CD4-positive, alpha-beta memory T cell (primary cell): ENCODE measurements at regions of chr1 and their contacts with region 1.

Region 1: DNA sequence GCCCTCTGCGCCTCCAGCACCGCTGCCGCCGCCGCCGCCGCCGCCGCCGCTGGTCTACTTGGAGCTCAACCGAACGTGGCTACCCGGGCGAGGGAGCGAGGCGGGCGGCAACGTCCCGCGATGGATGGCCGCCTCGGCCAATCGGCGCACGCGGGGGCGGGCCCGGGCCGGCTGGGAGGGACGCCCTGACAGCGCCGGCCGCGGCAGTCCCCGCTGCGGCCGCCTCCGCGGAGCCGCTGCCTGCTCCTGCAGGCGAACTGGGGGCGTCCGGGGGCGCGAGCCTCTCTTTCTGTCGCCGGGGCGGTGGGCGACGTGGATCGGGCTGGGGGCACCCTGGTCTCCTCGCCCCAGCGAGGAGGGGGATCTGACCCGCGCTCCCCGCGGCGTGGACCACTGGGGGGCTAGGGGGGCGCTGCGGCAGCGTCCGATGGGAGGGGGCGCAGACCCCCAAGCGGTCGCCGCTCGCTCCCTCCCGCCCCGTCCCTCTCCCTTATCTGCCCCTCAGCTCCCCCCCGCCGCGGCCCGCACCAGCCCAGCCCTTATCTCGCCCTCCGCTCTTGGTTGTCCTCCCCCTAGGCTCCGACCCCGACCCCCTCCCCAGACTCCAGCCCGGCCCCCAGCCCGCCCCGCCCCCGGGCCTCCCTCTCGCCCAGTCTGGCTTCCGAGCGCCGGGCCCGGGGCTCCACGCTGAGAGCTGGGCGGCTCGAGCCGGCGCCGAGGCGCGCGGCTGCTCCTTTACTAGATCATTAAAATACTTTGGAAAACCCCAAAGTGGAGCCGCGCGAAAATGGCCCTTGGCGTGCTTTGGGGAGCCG is at the start of gene SSBP3:
- DNase-seq: peak; percentile 93 to 94 (median 93)
- H3K4me3 ChIP-seq: peak within 1 kb of the TSS; percentile 45 to 91
- H3K4me3 Mint-ChIP-seq: peak within 1 kb of the TSS; percentile 95 to 99 (median 97)
- H3K27ac ChIP-seq: peak within 1 kb of the TSS; percentile 87
- H3K27ac Mint-ChIP-seq: peak within 1 kb of the TSS; percentile 88 to 99 (median 97)
- H3K4me1 ChIP-seq: peaks cover 67% of the 10 kb centered on the region
- H3K4me1 Mint-ChIP-seq: peaks cover 51 to 77% (median 62%) of the 10 kb centered on the region in 4 donors
- H3K27me3 ChIP-seq: no peaks in the 10 kb centered on the region
- H3K27me3 Mint-ChIP-seq: peaks cover 0 to 1% of the 10 kb centered on the region in 2 donors
- total RNA-seq, gene SSBP3: 67.6 to 87.6 TPM

Region 2: DNA sequence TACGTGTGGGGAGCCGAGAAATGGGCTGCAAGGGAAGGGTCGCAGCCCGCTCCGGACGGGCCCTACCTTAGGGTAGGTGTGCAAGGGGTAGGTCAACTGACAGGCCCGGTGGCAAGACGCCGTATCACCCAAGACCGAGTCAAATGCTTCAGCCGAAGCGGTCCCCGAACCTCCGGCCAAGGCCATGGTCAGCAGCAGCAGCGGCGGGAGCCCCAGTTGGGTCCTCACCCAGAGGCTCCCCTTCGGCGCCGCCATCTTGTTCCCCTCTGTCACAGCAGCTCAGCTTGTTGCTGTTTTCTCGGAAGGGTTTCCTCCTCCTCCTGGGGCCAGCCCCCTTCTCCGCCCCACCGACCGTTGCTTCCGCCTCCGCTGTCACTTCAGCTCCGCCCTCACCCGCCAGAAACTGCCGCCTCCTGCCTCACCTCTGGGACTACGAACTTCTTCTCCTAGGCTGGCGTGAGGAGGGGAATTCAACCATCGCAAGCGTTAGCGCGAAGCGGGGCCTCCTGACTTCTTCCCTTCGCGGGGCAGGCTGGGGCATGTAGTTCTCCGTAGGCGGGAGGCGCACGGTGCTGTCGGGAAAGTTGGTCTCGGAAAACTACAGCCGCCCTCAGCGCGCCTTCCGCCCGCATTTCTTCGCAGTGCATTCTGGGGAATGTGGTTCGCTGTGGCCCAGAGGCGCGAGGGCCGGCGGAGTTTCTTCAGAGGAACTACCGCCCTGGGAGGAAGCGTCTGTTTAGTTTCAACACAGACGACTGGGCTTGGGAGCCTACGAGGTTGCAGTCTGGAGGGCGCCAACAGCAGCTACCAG is 353.4 kb before region 1 on chr1 and contains the starts of genes TCEANC2 and TMEM59:
- CTCF ChIA-PET with region 1: no interaction called
- POLR2A ChIA-PET with region 1: interaction called, 15 read pairs
- intact Hi-C with region 1: loop called (anchors 1 kb)
- DNase-seq: peak; percentile 97 to 100 (median 99)
- H3K4me3 ChIP-seq: peak within 1 kb of the TSS; percentile 98 to 99
- H3K4me3 Mint-ChIP-seq: no peak within 1 kb of the TSS
- H3K27ac ChIP-seq: peak within 1 kb of the TSS; percentile 88
- H3K27ac Mint-ChIP-seq: no peak within 1 kb of the TSS
- H3K4me1 ChIP-seq: peaks cover 59% of the 10 kb centered on the region
- H3K4me1 Mint-ChIP-seq: peaks cover 23 to 49% (median 37%) of the 10 kb centered on the region in 4 donors
- H3K27me3 ChIP-seq: no peaks in the 10 kb centered on the region
- H3K27me3 Mint-ChIP-seq: no peaks in the 10 kb centered on the region
- total RNA-seq, gene TCEANC2: 12.1 to 13.1 TPM
- total RNA-seq, gene TMEM59: 212 to 222 TPM

Region 3: GRCh38 chr1:54121482-54122134 is 284.9 kb before region 1 on chr1:
- CTCF ChIA-PET with region 1: no interaction called
- POLR2A ChIA-PET with region 1: no interaction called
- intact Hi-C with region 1: loop called (anchors 2 kb)
- DNase-seq: peak in 4 of 5 donors; percentile 36 to 56 (median 45)
- H3K4me3 ChIP-seq: no peak overlapping the region
- H3K4me3 Mint-ChIP-seq: peak overlapping the region in 3 of 8 donors; percentile 31 to 49 (median 37)
- H3K27ac ChIP-seq: no peak overlapping the region
- H3K27ac Mint-ChIP-seq: peak overlapping the region in 1 of 7 donors; percentile 41
- H3K4me1 ChIP-seq: no peaks in the 10 kb centered on the region
- H3K4me1 Mint-ChIP-seq: peaks cover 0 to 11% (median 7%) of the 10 kb centered on the region in 4 donors
- H3K27me3 ChIP-seq: peaks cover 3% of the 10 kb centered on the region
- H3K27me3 Mint-ChIP-seq: no peaks in the 10 kb centered on the region

Region 4: DNA sequence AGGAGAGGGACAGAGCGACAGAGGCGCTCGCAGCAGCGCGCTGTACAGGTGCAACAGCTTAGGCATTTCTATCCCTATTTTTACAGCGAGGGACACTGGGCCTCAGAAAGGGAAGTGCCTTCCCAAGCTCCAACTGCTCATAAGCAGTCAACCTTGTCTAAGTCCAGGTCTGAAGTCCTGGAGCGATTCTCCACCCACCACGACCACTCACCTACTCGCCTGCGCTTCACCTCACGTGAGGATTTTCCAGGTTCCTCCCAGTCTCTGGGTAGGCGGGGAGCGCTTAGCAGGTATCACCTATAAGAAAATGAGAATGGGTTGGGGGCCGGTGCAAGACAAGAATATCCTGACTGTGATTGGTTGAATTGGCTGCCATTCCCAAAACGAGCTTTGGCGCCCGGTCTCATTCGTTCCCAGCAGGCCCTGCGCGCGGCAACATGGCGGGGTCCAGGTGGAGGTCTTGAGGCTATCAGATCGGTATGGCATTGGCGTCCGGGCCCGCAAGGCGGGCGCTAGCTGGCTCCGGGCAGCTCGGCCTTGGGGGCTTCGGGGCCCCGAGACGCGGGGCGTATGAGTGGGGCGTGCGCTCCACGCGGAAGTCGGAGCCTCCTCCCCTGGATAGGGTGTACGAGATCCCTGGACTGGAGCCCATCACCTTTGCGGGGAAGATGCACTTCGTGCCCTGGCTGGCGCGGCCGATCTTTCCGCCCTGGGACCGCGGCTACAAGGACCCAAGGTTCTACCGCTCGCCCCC is 206.6 kb before region 1 on chr1 and contains the starts of genes CYB5RL and MRPL37:
- CTCF ChIA-PET with region 1: no interaction called
- POLR2A ChIA-PET with region 1: interaction called, 20 read pairs
- intact Hi-C with region 1: loop called (anchors 1 kb)
- DNase-seq: peak; percentile 90 to 95 (median 92)
- H3K4me3 ChIP-seq: peak within 1 kb of the TSS; percentile 76 to 83
- H3K4me3 Mint-ChIP-seq: peak within 1 kb of the TSS; percentile 89 to 95 (median 92)
- H3K27ac ChIP-seq: peak within 1 kb of the TSS; percentile 72
- H3K27ac Mint-ChIP-seq: peak within 1 kb of the TSS; percentile 83 to 95 (median 93)
- H3K4me1 ChIP-seq: peaks cover 29% of the 10 kb centered on the region
- H3K4me1 Mint-ChIP-seq: peaks cover 17 to 40% (median 30%) of the 10 kb centered on the region in 4 donors
- H3K27me3 ChIP-seq: no peaks in the 10 kb centered on the region
- H3K27me3 Mint-ChIP-seq: no peaks in the 10 kb centered on the region
- total RNA-seq, gene CYB5RL: 10.5 to 10.7 TPM
- total RNA-seq, gene MRPL37: 33.4 to 39.0 TPM

Region 5: GRCh38 chr1:54464482-54465146 is 58.1 kb after region 1 on chr1:
- CTCF ChIA-PET with region 1: interaction called, 4 read pairs
- POLR2A ChIA-PET with region 1: interaction called, 23 read pairs
- intact Hi-C with region 1: loop called (anchors 5 kb)
- DNase-seq: no peak
- H3K4me3 ChIP-seq: no peak overlapping the region
- H3K4me3 Mint-ChIP-seq: no peak overlapping the region
- H3K27ac ChIP-seq: no peak overlapping the region
- H3K27ac Mint-ChIP-seq: peak overlapping the region in 2 of 7 donors; percentile 12 to 74
- H3K4me1 ChIP-seq: peaks cover 43% of the 10 kb centered on the region
- H3K4me1 Mint-ChIP-seq: peaks cover 24 to 50% (median 35%) of the 10 kb centered on the region in 4 donors
- H3K27me3 ChIP-seq: no peaks in the 10 kb centered on the region
- H3K27me3 Mint-ChIP-seq: no peaks in the 10 kb centered on the region

Region 6: GRCh38 chr1:54480525-54480848 is 73.9 kb after region 1 on chr1:
- CTCF ChIA-PET with region 1: interaction called, 6 read pairs
- POLR2A ChIA-PET with region 1: interaction called, 254 read pairs
- intact Hi-C with region 1: no loop called
- DNase-seq: no peak
- H3K4me3 ChIP-seq: no peak overlapping the region
- H3K4me3 Mint-ChIP-seq: peak overlapping the region; percentile 66 to 80 (median 76)
- H3K27ac ChIP-seq: peak overlapping the region; percentile 35
- H3K27ac Mint-ChIP-seq: peak overlapping the region; percentile 50 to 95 (median 88)
- H3K4me1 ChIP-seq: peaks cover 68% of the 10 kb centered on the region
- H3K4me1 Mint-ChIP-seq: peaks cover 58 to 83% (median 69%) of the 10 kb centered on the region in 4 donors
- H3K27me3 ChIP-seq: no peaks in the 10 kb centered on the region
- H3K27me3 Mint-ChIP-seq: no peaks in the 10 kb centered on the region

Region 7: DNA sequence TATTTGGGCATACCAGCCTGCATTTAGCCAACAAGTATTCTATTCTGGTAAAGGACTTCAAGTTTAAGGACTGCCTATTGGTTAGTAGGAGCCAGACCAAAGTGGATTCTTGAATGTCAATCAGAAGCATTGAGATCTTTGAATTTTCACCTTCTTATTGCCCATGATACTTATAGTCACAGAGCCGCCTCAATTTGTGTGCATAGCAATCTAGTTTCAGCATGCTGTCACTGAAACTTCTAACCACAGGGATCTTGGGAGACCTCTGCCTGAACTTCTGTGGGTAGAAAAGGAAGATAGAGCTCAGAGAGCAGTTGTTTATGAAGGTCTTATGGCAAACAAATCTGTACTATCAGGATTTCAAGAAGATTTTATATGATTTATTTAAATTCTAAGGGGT is 1310.1 kb after region 1 on chr1:
- CTCF ChIA-PET with region 1: no interaction called
- POLR2A ChIA-PET with region 1: no interaction called
- intact Hi-C with region 1: no loop called
- DNase-seq: no peak
- H3K4me3 ChIP-seq: no peak overlapping the region
- H3K4me3 Mint-ChIP-seq: no peak overlapping the region
- H3K27ac ChIP-seq: no peak overlapping the region
- H3K27ac Mint-ChIP-seq: no peak overlapping the region
- H3K4me1 ChIP-seq: no peaks in the 10 kb centered on the region
- H3K4me1 Mint-ChIP-seq: no peaks in the 10 kb centered on the region
- H3K27me3 ChIP-seq: no peaks in the 10 kb centered on the region
- H3K27me3 Mint-ChIP-seq: no peaks in the 10 kb centered on the region